IMR-90 (cell line): ENCODE measurements at regions of chr10 and their contacts with region 1.

Region 1: GRCh38 chr10:69045441-69046300 is 42.2 kb upstream of the SRGN start:
- DNase-seq: peak; percentile 62
- ATAC-seq: no peak
- H3K4me3 ChIP-seq: no peak overlapping the region
- H3K27ac ChIP-seq: no peak overlapping the region
- H3K4me1 ChIP-seq: peaks cover 11% of the 10 kb centered on the region
- H3K27me3 ChIP-seq: no peaks in the 10 kb centered on the region
- CTCF ChIP-seq: no peak
- POLR2A ChIP-seq: no peak
- RAD21 ChIP-seq: no peak

Region 2: DNA sequence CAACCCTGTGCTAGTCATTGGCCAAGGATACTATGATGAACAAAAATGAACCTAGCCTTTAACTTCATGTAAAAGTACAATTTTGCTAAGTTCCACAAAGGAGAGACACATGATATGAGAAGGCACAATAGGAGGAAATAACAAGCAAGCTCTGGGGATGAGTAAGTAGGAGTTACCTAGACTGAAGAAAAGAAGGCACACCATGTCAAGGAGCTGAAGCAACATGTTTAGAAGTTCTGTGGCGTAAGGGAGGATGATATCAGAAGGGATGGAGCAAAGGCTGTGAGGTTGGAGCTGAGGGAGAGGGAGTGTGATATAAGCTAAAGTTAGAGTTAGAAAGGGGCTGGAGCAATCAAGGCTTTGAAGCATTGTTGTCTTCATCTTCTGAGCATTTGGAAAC is 31.5 kb before region 1 on chr10:
- CTCF ChIA-PET with region 1: no interaction called
- POLR2A ChIA-PET with region 1: interaction called, 8 read pairs
- dilution Hi-C with region 1: no loop called
- in situ Hi-C with region 1: no loop called
- intact Hi-C with region 1: loop called (anchors 5 kb)
- DNase-seq: peak; percentile 66
- ATAC-seq: peak; percentile 29; the same call in 1 of the 2 replicates
- H3K4me3 ChIP-seq: no peak overlapping the region
- H3K27ac ChIP-seq: peak overlapping the region; percentile 16; the same call in 1 of the 2 replicates
- H3K4me1 ChIP-seq: no peaks in the 10 kb centered on the region
- H3K27me3 ChIP-seq: no peaks in the 10 kb centered on the region
- CTCF ChIP-seq: no peak
- POLR2A ChIP-seq: no peak
- RAD21 ChIP-seq: no peak

Region 3: DNA sequence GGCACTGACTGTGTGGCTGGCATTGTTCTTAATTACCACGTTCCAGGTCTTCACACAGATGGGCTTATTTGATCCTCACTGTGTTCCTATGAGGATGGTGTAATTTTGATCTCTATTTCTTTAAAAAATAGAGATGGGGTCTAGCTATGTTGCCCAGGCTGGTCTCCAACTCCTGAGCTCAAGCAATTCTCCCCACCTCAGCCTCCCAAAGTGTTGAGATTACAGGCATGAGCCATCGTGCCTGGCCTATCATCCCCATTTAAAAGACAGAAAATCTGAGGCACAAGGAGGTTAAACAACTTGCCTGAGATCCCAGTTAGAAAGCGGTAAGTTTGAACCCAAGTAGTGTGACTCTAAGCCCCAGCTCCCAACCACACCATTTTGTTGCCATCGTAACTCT is 25.3 kb after region 1 on chr10:
- CTCF ChIA-PET with region 1: no interaction called
- POLR2A ChIA-PET with region 1: interaction called, 11 read pairs
- dilution Hi-C with region 1: no loop called
- in situ Hi-C with region 1: no loop called
- intact Hi-C with region 1: no loop called
- DNase-seq: no peak
- ATAC-seq: no peak
- H3K4me3 ChIP-seq: no peak overlapping the region
- H3K27ac ChIP-seq: no peak overlapping the region
- H3K4me1 ChIP-seq: peaks cover 3% of the 10 kb centered on the region; the same call in 1 of the 2 replicates
- H3K27me3 ChIP-seq: no peaks in the 10 kb centered on the region
- CTCF ChIP-seq: no peak
- POLR2A ChIP-seq: no peak
- RAD21 ChIP-seq: no peak